ENCODE measurements at regions of chr13 and their contacts with region 1.

Region 1: DNA sequence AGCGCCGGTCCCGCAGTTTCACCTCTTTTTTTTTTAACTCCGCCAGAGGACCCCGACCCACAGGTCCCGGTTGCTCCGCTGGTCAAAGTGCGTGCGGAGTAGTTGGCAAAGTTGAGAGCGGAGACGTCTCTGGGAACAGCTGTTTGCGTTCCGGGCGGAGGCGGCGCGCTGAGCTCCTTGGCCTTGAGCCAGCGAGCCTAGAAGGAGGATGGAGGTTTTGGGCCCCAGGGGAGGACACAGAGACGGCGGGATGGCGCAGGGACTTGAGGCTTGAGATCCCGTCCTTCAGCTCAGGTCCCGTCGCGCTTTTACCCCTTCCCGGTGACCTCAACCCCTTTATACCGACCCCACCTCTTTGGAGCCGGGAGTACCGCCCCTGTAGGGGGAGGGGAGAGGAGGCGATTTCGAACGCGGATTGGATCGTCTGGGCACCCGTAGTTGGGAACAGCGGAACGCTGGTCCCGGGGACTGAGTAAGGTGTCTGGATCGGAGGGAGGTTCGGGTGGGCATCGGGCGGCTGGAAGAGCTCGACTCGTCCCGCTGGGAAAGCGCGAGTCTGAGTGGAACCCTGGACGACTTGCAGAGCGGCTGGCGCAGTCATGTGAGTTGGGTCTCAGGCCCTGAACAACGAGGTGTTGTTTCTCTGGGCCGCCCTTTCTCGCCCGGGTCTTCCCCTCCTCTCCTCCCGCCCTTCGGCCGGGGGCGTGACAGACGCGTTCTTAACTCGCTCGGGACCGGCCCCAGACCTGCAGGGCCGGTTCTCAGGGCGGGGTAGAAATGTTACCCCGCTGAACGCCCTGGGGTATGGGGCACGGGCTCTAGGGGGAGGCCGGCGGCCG is at the start of gene WBP4:
- DNase-seq: peak; percentile 94 to 97
- ATAC-seq: peak; percentile 82 to 93 (median 88)
- H3K4me3 ChIP-seq: peak within 1 kb of the TSS; percentile 42 to 94 (median 81)
- H3K27ac ChIP-seq: peak within 1 kb of the TSS; percentile 87 to 98 (median 98)
- H3K4me1 ChIP-seq: peaks cover 0 to 77% (median 72%) of the 10 kb centered on the region in 9 donors
- H3K27me3 ChIP-seq: no peaks in the 10 kb centered on the region
- CTCF ChIP-seq: peak in 4 of 9 donors; percentile 24 to 46 (median 36)
- total RNA-seq, gene WBP4: 13.0 to 24.4 (median 21.8) TPM

Region 2: GRCh38 chr13:40770934-40771618 is 290.2 kb before region 1 on chr13 and contains the start of gene MRPS31:
- intact Hi-C with region 1: loop called in 2 of 10 experiments (anchors 5 to 10 kb)
- DNase-seq: peak; percentile 95 to 97
- ATAC-seq: peak; percentile 99 to 100 (median 100)
- H3K4me3 ChIP-seq: peak within 1 kb of the TSS; percentile 53 to 94 (median 74)
- H3K27ac ChIP-seq: peak within 1 kb of the TSS; percentile 73 to 94 (median 88)
- H3K4me1 ChIP-seq: peaks cover 0 to 26% (median 11%) of the 10 kb centered on the region in 9 donors
- H3K27me3 ChIP-seq: no peaks in the 10 kb centered on the region
- CTCF ChIP-seq: peak in 3 of 9 donors; percentile 6 to 23 (median 14)
- total RNA-seq, gene MRPS31: 22.2 to 32.9 (median 30.4) TPM

Region 3: GRCh38 chr13:40922437-40923040 is 138.8 kb before region 1 on chr13:
- intact Hi-C with region 1: loop called in 7 of 10 experiments (anchors 1 to 10 kb)
- DNase-seq: peak; percentile 13 to 18
- ATAC-seq: no peak
- H3K4me3 ChIP-seq: peak overlapping the region in 3 of 10 donors; percentile 65 to 77 (median 72)
- H3K27ac ChIP-seq: peak overlapping the region in 4 of 10 donors; percentile 45 to 89 (median 72)
- H3K4me1 ChIP-seq: peaks cover 0 to 17% (median 11%) of the 10 kb centered on the region in 9 donors
- H3K27me3 ChIP-seq: no peaks in the 10 kb centered on the region
- CTCF ChIP-seq: no peak

Region 4: DNA sequence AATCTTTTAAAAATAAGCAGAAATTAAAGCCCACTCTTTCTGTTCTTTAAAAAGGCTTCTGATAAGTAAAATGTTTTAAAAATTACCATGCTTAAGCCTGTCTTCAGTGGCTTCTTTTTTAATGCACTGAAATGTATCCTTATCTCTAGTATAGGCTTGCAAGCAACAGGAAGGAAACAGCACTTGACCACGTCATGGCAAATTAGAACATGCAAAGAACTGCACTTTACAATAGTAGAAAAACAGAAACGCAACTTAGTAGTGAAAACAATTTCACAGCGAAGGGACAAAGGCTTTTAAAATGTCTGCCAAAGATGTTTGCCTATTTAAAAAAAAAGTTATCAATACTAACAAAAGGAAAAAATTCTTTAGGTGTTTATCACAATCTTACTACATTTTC is 78.5 kb before region 1 on chr13:
- intact Hi-C with region 1: loop called in 8 of 10 experiments (anchors 2 to 10 kb)
- DNase-seq: peak in 1 of 2 donors; percentile 76
- ATAC-seq: peak; percentile 63 to 87 (median 83)
- H3K4me3 ChIP-seq: peak overlapping the region; percentile 20 to 54 (median 42)
- H3K27ac ChIP-seq: peak overlapping the region; percentile 31 to 91 (median 84)
- H3K4me1 ChIP-seq: peaks cover 7 to 89% (median 75%) of the 10 kb centered on the region in 9 donors
- H3K27me3 ChIP-seq: no peaks in the 10 kb centered on the region
- CTCF ChIP-seq: no peak

Region 5: GRCh38 chr13:41193919-41194824 is 132.9 kb after region 1 on chr13 and contains the start of gene KBTBD7:
- intact Hi-C with region 1: loop called in 1 of 10 experiments (anchors 10 kb)
- DNase-seq: peak; percentile 94
- ATAC-seq: peak; percentile 99 to 100 (median 99)
- H3K4me3 ChIP-seq: peak within 1 kb of the TSS; percentile 39 to 84 (median 68)
- H3K27ac ChIP-seq: peak within 1 kb of the TSS; percentile 18 to 94 (median 88)
- H3K4me1 ChIP-seq: peaks cover 2 to 29% (median 19%) of the 10 kb centered on the region in 9 donors
- H3K27me3 ChIP-seq: no peaks in the 10 kb centered on the region
- CTCF ChIP-seq: peak in 1 of 9 donors; percentile 10
- total RNA-seq, gene KBTBD7: 4.1 to 7.6 (median 5.6) TPM

Region 6: DNA sequence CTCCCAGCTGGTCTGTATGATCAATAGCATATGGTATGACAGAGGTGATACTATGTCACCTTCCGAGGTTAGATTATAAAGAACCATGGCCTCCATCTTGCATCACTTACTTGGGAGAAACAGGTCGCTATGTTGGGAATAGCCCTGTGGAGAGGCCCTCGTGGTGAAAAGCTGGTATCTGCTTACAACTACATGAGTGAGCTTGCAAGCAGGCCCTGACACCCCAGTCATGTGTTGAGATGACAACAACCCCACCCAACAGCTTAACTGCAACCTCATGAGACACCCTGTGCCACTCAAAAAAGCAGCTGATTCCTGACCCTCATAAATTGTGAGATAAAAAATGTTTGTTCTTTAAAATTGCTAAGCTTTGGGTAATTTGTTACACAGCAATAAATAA is 183.3 kb after region 1 on chr13:
- intact Hi-C with region 1: no loop called
- DNase-seq: no peak
- ATAC-seq: no peak
- H3K4me3 ChIP-seq: no peak overlapping the region
- H3K27ac ChIP-seq: no peak overlapping the region
- H3K4me1 ChIP-seq: peaks cover 0 to 5% (median 0%) of the 10 kb centered on the region in 9 donors
- H3K27me3 ChIP-seq: no peaks in the 10 kb centered on the region
- CTCF ChIP-seq: no peak